Activated naive CD4-positive, alpha-beta T cell treated with anti-CD3 and anti-CD28 coated beads for 36 hours (primary cell): ENCODE measurements at regions of chr1 and their contacts with region 1.

Region 1: DNA sequence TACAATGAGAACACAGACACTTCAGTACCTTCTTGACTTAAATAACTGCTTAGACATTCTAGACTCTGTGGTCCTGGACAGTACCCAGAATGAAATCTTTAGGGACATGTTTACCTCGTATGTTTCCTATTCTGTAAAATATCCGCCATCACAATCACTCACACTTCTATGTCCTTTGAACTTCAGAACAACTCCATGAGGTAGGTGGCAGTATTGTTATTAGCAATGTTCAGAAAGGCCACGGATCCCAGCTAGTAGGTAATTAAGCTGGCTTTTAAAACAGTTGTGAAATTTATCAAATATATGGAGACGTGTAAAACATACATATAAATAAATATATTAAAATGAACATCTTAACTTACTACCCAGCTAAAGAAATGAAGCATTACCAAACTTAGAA is 83.4 kb downstream of the CACHD1 start:
- DNase-seq: no peak
- H3K4me3 Mint-ChIP-seq: no peak overlapping the region
- H3K27ac Mint-ChIP-seq: no peak overlapping the region
- H3K4me1 Mint-ChIP-seq: peaks cover 41% of the 10 kb centered on the region
- H3K27me3 Mint-ChIP-seq: no peaks in the 10 kb centered on the region

Region 2: GRCh38 chr1:64487061-64487460 is 66.2 kb before region 1 on chr1:
- CTCF ChIA-PET with region 1: interaction called, 3 read pairs
- intact Hi-C with region 1: loop called (anchors 1 kb)
- DNase-seq: peak; percentile 21
- H3K4me3 Mint-ChIP-seq: no peak overlapping the region
- H3K27ac Mint-ChIP-seq: no peak overlapping the region
- H3K4me1 Mint-ChIP-seq: peaks cover 28% of the 10 kb centered on the region
- H3K27me3 Mint-ChIP-seq: peaks cover 2% of the 10 kb centered on the region

Region 3: GRCh38 chr1:64539781-64540218 is 13.5 kb before region 1 on chr1:
- CTCF ChIA-PET with region 1: no interaction called
- intact Hi-C with region 1: loop called (anchors 1 kb)
- DNase-seq: peak; percentile 31
- H3K4me3 Mint-ChIP-seq: peak overlapping the region; percentile 47
- H3K27ac Mint-ChIP-seq: no peak overlapping the region
- H3K4me1 Mint-ChIP-seq: peaks cover 55% of the 10 kb centered on the region
- H3K27me3 Mint-ChIP-seq: no peaks in the 10 kb centered on the region

Region 4: DNA sequence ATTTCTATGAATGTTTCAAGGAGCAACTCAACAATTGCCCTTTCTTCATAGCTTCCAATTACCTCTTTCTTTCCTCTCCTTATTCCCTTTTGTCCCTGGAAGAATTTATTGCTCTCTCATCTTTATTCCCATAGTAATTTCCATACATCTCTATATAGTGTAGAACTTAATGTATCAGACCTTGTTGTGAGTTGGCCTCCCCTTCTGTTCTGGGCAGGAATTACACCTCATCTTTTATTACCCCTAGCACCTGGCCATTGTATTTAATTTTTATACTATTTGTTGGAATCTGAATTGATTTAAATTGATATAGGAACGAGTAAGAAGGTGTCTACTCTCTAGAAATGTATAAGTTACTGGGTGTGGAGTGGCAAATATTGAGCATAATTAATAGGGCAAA is 31.2 kb after region 1 on chr1:
- CTCF ChIA-PET with region 1: no interaction called
- intact Hi-C with region 1: no loop called
- DNase-seq: no peak
- H3K4me3 Mint-ChIP-seq: no peak overlapping the region
- H3K27ac Mint-ChIP-seq: no peak overlapping the region
- H3K4me1 Mint-ChIP-seq: peaks cover 12% of the 10 kb centered on the region
- H3K27me3 Mint-ChIP-seq: no peaks in the 10 kb centered on the region

Region 5: GRCh38 chr1:64631346-64632034 is 78.2 kb after region 1 on chr1:
- CTCF ChIA-PET with region 1: no interaction called
- intact Hi-C with region 1: loop called (anchors 2 kb)
- DNase-seq: no peak
- H3K4me3 Mint-ChIP-seq: no peak overlapping the region
- H3K27ac Mint-ChIP-seq: no peak overlapping the region
- H3K4me1 Mint-ChIP-seq: peaks cover 16% of the 10 kb centered on the region
- H3K27me3 Mint-ChIP-seq: no peaks in the 10 kb centered on the region

Region 6: DNA sequence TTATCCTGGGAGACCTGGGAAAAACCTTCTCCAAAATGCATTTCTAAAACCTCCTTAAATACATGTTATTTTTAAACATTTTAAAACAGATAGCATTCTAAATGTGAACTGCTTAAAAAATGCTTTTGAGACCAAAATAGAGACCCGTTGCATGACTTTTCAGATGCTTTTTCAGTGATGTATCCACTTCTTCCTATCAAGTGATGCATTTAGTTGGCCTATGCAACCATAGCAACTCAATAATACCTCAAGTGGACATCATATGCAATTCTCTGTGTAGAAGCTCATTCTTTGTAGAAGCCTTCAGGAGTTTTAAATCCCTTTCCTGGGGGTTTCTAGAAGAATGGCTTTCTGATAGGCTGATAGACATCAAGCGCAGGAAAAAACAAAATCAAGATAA is 97.1 kb after region 1 on chr1:
- CTCF ChIA-PET with region 1: no interaction called
- intact Hi-C with region 1: no loop called
- DNase-seq: no peak
- H3K4me3 Mint-ChIP-seq: no peak overlapping the region
- H3K27ac Mint-ChIP-seq: no peak overlapping the region
- H3K4me1 Mint-ChIP-seq: no peaks in the 10 kb centered on the region
- H3K27me3 Mint-ChIP-seq: no peaks in the 10 kb centered on the region

Region 7: DNA sequence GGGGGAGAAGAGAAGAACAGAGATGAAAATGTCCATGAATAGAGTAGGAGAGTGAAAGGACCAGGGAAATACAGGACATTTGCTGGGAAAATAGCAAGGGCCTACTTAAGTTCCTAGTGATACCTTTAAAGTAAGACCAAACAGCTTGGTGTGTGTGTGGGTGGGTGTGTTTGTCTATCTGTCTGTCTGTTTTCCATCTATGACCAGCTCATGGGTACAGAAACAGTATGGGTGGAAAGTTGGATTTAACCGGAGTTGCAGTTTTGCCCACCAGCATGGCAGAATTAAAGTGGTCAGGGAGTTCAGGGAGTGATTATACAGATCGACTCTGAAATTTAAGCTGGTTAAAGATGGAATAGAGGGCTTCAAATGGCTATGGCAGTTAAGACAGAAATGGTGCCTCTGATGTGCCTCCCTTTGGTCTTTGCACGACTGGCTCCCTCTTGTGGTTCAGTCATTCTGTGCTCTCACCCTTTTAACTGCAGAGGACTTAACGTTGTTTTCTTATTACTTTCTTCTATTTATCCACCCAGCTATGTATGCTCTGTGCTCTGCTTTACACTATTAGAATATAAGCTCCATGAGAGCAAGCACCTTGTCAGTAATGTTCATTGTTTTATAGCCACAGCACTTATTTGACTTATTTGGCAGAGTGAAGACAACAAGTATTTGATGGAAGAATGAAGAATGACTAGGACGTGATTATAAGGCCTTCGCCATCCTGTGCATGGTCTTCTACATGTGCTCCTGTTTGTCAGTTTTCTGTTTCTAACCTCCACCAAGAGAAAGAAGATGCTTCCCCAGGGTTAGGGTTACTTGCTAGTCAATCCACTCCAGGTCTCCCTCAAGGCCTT is 522.1 kb after region 1 on chr1:
- CTCF ChIA-PET with region 1: no interaction called
- intact Hi-C with region 1: loop called (anchors 2 kb)
- DNase-seq: peak; percentile 84
- H3K4me3 Mint-ChIP-seq: no peak overlapping the region
- H3K27ac Mint-ChIP-seq: no peak overlapping the region
- H3K4me1 Mint-ChIP-seq: peaks cover 20% of the 10 kb centered on the region
- H3K27me3 Mint-ChIP-seq: no peaks in the 10 kb centered on the region